ENCODE measurements at regions of chr14 and their contacts with region 1.

Region 1: GRCh38 chr14:71371711-71372396 is 464.6 kb downstream of the PCNX1 start:
- DNase-seq: peak; percentile 62
- H3K4me3 Mint-ChIP-seq: peak overlapping the region; percentile 46
- H3K27ac Mint-ChIP-seq: peak overlapping the region; percentile 50
- H3K4me1 Mint-ChIP-seq: peaks cover 20% of the 10 kb centered on the region
- H3K27me3 Mint-ChIP-seq: no peaks in the 10 kb centered on the region

Region 2: DNA sequence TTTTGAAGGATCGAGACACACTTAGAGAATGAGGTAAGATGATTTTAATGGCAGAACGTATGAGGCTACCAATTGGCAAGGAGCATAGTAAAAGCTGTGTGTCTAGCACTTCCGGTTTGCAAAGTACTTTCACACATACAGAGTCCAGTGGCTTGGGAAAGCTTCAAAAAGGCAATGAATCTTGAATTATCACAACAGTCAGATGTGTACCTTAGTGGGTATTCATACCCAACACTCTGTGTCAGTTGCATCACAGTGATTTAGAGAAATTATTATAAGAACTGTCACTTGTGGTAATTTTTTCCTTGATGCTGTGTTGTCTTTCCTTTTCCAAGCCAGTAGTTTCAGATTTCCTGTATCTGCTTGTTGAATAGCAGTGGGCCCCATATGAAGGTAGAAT is 40.5 kb before region 1 on chr14:
- intact Hi-C with region 1: loop called (anchors 5 kb)
- DNase-seq: no peak
- H3K4me3 Mint-ChIP-seq: peak overlapping the region; percentile 23
- H3K27ac Mint-ChIP-seq: peak overlapping the region; percentile 92
- H3K4me1 Mint-ChIP-seq: peaks cover 55% of the 10 kb centered on the region
- H3K27me3 Mint-ChIP-seq: no peaks in the 10 kb centered on the region

Region 3: GRCh38 chr14:71403656-71404055 is 31.8 kb after region 1 on chr14:
- intact Hi-C with region 1: loop called (anchors 2 kb)
- DNase-seq: peak; percentile 81
- H3K4me3 Mint-ChIP-seq: no peak overlapping the region
- H3K27ac Mint-ChIP-seq: peak overlapping the region; percentile 36
- H3K4me1 Mint-ChIP-seq: peaks cover 40% of the 10 kb centered on the region
- H3K27me3 Mint-ChIP-seq: no peaks in the 10 kb centered on the region

Measured in activated CD4-positive, alpha-beta T cell treated with anti-CD3 and anti-CD28 coated beads, Interleukin-2, amount 10 ng/mL, durations not matched to agents 24 days and 14 days (primary cell).